ENCODE measurements at regions of chr19 and their contacts with region 1.

Region 1: GRCh38 chr19:34336781-34337271 is 28.2 kb upstream of the GPI start:
- H3K4me3 ChIP-seq: no peak overlapping the region
- H3K27ac ChIP-seq: no peak overlapping the region
- H3K4me1 ChIP-seq: no peaks in the 10 kb centered on the region; the same call in 1 of the 2 replicates
- CTCF ChIP-seq: peak; percentile 56; the same call in 1 of the 2 replicates

Region 2: DNA sequence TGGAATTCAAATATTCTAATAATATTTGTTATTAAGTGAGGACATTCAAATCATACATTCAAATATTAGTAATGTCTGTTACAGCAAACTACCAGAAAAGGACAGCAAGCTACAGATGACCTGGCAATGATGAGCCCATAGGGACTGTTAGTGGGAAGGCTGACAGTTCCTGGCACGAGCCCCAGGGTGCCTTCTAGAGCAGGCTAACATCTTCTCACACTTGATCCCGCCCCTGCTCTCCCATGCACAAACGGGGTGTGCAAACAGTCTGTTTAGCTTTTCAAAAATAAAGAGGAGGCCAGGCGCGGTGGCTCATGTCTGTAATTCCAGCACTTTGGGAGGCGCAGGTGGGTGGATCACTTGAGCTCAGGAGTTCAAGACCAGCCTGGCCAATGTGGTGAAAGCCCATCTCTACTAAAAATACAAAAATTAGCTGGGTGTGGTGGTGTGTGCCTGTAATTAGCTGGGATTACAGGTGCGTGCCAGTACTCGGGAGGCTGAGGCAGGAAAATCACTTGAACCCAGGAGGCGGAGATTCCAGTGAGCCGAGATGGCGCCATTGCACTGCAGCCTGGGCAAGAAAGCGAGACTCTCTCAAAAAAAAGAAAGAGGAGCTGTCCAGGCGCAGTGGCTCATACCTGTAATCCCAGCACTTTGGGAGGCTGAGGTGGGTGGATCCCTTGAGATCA is 92.1 kb before region 1 on chr19:
- CTCF ChIA-PET with region 1: interaction called, 12 read pairs
- POLR2A ChIA-PET with region 1: no interaction called
- H3K4me3 ChIP-seq: no peak overlapping the region
- H3K27ac ChIP-seq: no peak overlapping the region
- H3K4me1 ChIP-seq: peaks cover 16% of the 10 kb centered on the region
- CTCF ChIP-seq: peak; percentile 51; the same call in 1 of the 2 replicates